ENCODE measurements at regions of chr5 and their contacts with region 1.

Region 1: DNA sequence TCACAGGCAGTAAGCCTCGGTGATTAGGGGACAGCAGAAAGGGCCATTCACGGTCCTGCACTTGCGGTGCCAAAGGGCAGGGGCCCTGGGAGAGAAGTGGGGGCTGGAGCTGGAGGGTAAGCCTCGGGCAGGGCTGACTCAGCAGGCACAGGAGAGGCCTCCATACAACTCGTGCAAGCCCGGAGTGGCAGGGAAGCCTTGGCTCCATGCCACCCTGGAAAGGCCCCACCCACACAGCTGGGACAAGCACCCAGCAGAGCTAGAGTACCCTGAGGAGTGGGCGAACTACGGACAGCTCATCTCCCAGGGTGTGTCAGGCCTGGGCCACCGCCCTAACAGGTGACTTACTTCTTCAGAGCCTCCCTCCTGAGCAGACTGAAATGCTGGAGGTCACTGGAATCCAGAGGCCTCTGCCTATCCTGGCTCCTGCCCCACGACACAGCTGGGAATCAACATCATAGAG is 5.6 kb upstream of the CAMK2A start:
- DNase-seq: peak; percentile 81
- ATAC-seq: peak; percentile 62
- H3K4me3 ChIP-seq: no peak overlapping the region
- H3K27ac ChIP-seq: no peak overlapping the region
- H3K4me1 ChIP-seq: peaks cover 22% of the 10 kb centered on the region
- H3K27me3 ChIP-seq: no peaks in the 10 kb centered on the region
- CTCF ChIP-seq: no peak
- POLR2A ChIP-seq: no peak
- RAD21 ChIP-seq: no peak

Region 2: DNA sequence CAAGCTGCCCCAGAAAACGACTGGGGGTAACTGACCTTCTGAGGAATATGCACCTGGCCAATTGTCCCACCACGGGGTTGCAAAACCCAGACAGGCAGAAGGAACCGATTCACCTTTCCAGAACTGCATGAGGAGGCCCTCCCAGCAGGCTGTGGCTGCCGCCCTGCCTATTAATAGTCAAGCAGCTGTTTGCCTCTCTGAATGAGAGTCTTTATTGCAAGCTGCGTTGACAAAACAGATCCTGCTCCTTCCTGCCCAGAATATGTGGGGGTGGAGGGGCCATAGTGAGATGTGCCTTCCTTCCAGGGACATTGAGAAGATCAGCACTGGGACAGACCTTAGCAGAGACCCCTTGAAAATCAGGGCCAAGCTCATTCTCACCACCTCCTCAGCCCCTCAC is 44.0 kb after region 1 on chr5:
- CTCF ChIA-PET with region 1: no interaction called
- POLR2A ChIA-PET with region 1: interaction called, 3 read pairs
- dilution Hi-C with region 1: no loop called
- in situ Hi-C with region 1: no loop called
- intact Hi-C with region 1: loop called (anchors 1 kb)
- DNase-seq: no peak
- ATAC-seq: no peak
- H3K4me3 ChIP-seq: no peak overlapping the region
- H3K27ac ChIP-seq: no peak overlapping the region
- H3K4me1 ChIP-seq: peaks cover 12% of the 10 kb centered on the region
- H3K27me3 ChIP-seq: no peaks in the 10 kb centered on the region; the same call in 1 of the 2 replicates
- CTCF ChIP-seq: no peak
- POLR2A ChIP-seq: no peak
- RAD21 ChIP-seq: no peak

Measured in IMR-90 (cell line).